HCT116 (cell line): ENCODE measurements at regions of chr9 and their contacts with region 1.

Region 1: GRCh38 chr9:116661037-116661954 is 25.8 kb upstream of the TRIM32 start:
- DNase-seq: peak; percentile 59
- ATAC-seq: peak; percentile 90
- H3K4me3 ChIP-seq: no peak overlapping the region
- H3K27ac ChIP-seq: no peak overlapping the region
- H3K4me1 ChIP-seq: no peaks in the 10 kb centered on the region; a peak in 1 of 4 replicates
- H3K27me3 ChIP-seq: no peaks in the 10 kb centered on the region
- CTCF ChIP-seq: peak; percentile 69 to 73 (median 73)
- POLR2A ChIP-seq: no peak
- RAD21 ChIP-seq: peak; percentile 79

Region 2: GRCh38 chr9:115883457-115884329 is 777.6 kb before region 1 on chr9:
- CTCF ChIA-PET with region 1: no interaction called
- POLR2A ChIA-PET with region 1: no interaction called
- RAD21 ChIA-PET with region 1: no interaction called
- intact Hi-C with region 1: loop called (anchors 2 kb)
- DNase-seq: peak; percentile 12
- ATAC-seq: peak; percentile 95
- H3K4me3 ChIP-seq: no peak overlapping the region
- H3K27ac ChIP-seq: no peak overlapping the region
- H3K4me1 ChIP-seq: no peaks in the 10 kb centered on the region
- H3K27me3 ChIP-seq: peaks cover 52% of the 10 kb centered on the region
- CTCF ChIP-seq: peak; percentile 69 to 74 (median 73)
- POLR2A ChIP-seq: no peak
- RAD21 ChIP-seq: peak; percentile 83

Region 3: DNA sequence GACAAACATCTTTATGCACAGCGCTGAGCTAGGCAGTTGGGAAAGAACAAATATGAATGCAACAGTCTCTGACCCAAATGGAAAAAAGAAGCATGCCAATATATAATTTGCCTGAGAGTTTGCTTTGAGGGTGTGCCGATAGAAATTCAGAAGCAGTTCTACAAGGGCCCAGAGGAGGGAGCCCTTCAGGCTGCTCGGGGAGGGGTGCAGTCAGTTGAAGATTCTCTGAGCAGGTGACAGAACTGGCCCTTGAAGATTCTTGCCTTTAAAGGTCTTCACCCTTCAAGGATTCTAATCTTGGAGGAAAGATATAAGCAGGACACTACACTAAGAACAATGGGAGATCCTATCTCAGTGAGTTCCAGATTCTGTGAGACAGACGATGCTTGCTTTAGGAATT is 511.5 kb before region 1 on chr9:
- CTCF ChIA-PET with region 1: interaction called, 3 read pairs
- POLR2A ChIA-PET with region 1: no interaction called
- RAD21 ChIA-PET with region 1: no interaction called
- intact Hi-C with region 1: loop called (anchors 2 kb)
- DNase-seq: peak; percentile 22
- ATAC-seq: peak; percentile 77
- H3K4me3 ChIP-seq: no peak overlapping the region
- H3K27ac ChIP-seq: no peak overlapping the region
- H3K4me1 ChIP-seq: no peaks in the 10 kb centered on the region
- H3K27me3 ChIP-seq: peaks cover 11% of the 10 kb centered on the region; the same call in 1 of the 2 replicates
- CTCF ChIP-seq: peak; percentile 49 to 81 (median 75); a peak in 5 of 6 replicates
- POLR2A ChIP-seq: no peak
- RAD21 ChIP-seq: peak; percentile 51; the same call in 1 of the 2 replicates

Region 4: GRCh38 chr9:116494815-116495634 is 166.3 kb before region 1 on chr9:
- CTCF ChIA-PET with region 1: no interaction called
- POLR2A ChIA-PET with region 1: no interaction called
- RAD21 ChIA-PET with region 1: no interaction called
- intact Hi-C with region 1: loop called (anchors 2 kb)
- DNase-seq: peak; percentile 35
- ATAC-seq: peak; percentile 83
- H3K4me3 ChIP-seq: no peak overlapping the region
- H3K27ac ChIP-seq: no peak overlapping the region
- H3K4me1 ChIP-seq: peaks cover 7 to 29% of the 10 kb centered on the region in 2 experiments; a peak in 3 of 4 replicates
- H3K27me3 ChIP-seq: no peaks in the 10 kb centered on the region
- CTCF ChIP-seq: peak; percentile 50 to 88 (median 86)
- POLR2A ChIP-seq: no peak
- RAD21 ChIP-seq: peak; percentile 64

Region 5: DNA sequence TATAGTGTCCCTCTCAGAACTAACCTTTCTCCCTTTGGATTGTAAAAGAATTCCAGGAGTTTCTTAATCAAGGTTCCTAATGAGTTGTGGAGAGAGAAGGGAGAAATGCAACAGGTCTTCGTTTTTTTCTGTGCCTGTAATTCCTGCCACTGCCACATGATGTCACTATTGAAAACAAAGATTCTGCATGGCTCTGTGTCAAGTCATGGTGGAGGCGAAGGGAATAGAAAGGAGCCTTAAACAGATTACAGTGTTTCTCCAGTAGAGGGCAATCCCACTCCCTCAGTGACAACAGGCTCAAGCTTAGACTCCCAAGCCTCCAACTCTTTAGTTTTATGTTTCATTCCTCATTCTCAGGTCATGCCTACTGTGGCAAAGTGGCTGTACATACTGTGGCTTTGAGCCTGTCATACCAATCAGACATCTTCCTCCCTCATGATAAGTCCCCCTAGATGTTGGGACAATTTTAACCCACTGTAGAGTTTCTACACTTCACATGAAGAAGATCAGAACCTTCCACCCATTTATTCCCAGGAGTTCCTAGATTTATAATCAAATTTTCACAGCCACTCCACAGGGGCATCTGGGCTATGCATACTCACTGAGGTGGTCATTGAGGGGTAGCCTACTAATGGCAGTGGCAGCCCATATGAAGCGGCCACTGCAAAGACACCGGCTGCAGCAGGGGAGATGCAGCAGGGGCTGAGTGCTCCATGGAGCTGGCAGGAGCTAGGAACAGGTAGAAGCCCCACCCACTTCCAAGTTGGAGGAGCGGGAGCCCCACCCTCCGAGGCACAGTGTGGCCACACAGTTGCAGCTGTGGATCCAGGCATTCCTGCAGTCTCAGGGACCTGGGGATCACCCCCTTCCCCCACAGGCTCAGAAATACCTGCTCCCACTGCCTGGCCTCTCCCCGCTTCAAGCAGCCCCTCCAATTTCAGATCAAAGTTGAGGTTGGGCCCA is 71.6 kb before region 1 on chr9:
- CTCF ChIA-PET with region 1: interaction called, 3 read pairs
- POLR2A ChIA-PET with region 1: no interaction called
- RAD21 ChIA-PET with region 1: no interaction called
- intact Hi-C with region 1: loop called (anchors 1 kb)
- DNase-seq: peak; percentile 72
- ATAC-seq: peak; percentile 99
- H3K4me3 ChIP-seq: no peak overlapping the region
- H3K27ac ChIP-seq: no peak overlapping the region
- H3K4me1 ChIP-seq: peaks cover 0 to 4% of the 10 kb centered on the region in 2 experiments; a peak in 1 of 4 replicates
- H3K27me3 ChIP-seq: no peaks in the 10 kb centered on the region
- CTCF ChIP-seq: peak; percentile 80 to 97 (median 95)
- POLR2A ChIP-seq: no peak
- RAD21 ChIP-seq: peak; percentile 71